Common myeloid progenitor, CD34-positive (primary cell): ENCODE measurements at regions of chr11 and their contacts with region 1.

Region 1: GRCh38 chr11:46498179-46498578 is 95.6 kb downstream of the AMBRA1 start:
- DNase-seq: no peak
- H3K4me3 ChIP-seq: no peak overlapping the region
- H3K27ac ChIP-seq: no peak overlapping the region
- H3K4me1 ChIP-seq: no peaks in the 10 kb centered on the region
- H3K27me3 ChIP-seq: no peaks in the 10 kb centered on the region

Region 2: GRCh38 chr11:45949992-45950407 is 548.2 kb before region 1 on chr11:
- CTCF ChIA-PET with region 1: no interaction called
- POLR2A ChIA-PET with region 1: no interaction called
- DNase-seq: no peak
- H3K4me3 ChIP-seq: no peak overlapping the region
- H3K27ac ChIP-seq: no peak overlapping the region
- H3K4me1 ChIP-seq: no peaks in the 10 kb centered on the region
- H3K27me3 ChIP-seq: no peaks in the 10 kb centered on the region

Region 3: DNA sequence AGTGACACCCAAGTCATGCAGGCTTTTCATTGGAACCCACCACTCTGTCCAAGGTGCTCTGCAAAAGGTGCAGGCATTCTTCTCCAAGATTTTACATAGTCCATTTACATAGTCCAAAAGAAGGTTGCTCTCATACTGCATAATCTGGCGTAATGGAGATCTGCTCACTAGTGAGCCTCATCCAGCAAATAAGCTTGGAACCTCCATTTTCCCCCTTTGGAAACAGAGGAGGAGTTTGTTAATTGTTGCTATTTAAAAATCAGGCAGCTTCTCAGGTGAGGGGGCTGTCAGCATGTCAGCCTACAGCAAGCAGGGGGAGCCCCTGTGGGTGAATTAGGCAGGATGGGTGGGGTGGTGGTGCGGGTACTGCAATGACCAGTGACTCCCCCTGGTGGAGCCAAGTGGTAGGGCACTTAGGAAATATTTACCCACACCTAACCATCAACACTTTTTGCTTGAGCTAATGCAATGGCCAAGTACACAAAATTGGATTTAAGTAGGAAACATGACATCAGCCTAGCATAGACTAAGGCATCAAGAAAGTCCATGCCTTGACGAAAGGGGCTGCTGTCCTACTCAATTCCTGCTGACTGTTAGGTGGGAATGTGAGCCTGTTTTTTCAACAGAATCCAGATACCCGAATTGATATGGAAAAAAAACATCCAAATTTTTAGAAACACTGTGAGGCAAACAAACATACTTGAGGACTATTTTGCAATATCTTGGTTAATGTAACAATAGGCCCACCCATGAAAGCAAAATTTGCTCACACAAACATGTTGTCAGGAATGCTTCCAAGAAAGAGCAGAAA is 31.1 kb after region 1 on chr11:
- CTCF ChIA-PET with region 1: interaction called, 190 read pairs
- POLR2A ChIA-PET with region 1: no interaction called
- DNase-seq: peak; percentile 86 to 87 (median 86)
- H3K4me3 ChIP-seq: no peak overlapping the region
- H3K27ac ChIP-seq: no peak overlapping the region
- H3K4me1 ChIP-seq: peaks cover 0 to 16% (median 12%) of the 10 kb centered on the region in 4 experiments
- H3K27me3 ChIP-seq: no peaks in the 10 kb centered on the region